OCI-LY7 (cell line): ENCODE measurements at regions of chr20 and their contacts with region 1.

Region 1: DNA sequence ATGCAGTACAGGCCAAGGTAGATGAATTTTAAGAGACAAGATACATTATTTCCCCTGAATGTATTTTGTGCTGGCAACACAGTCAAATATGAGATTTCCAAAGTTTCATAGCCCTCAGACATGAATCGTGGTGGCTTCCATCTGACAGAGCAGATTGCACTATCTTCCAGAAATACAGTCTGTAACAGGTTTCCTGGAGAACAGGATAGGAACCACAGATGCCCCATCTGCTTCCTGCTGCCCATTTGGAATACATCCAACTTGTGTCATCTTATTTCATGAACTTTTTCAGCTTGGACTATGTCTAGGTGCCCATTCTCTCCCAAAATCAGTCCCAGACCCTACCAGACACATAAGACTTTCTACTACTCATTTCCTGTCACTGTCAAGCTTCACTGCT is 426.0 kb downstream of the KIF16B start:
- DNase-seq: no peak
- H3K4me3 ChIP-seq: no peak overlapping the region
- H3K27ac ChIP-seq: no peak overlapping the region
- H3K4me1 ChIP-seq: no peaks in the 10 kb centered on the region
- CTCF ChIP-seq: no peak

Region 2: DNA sequence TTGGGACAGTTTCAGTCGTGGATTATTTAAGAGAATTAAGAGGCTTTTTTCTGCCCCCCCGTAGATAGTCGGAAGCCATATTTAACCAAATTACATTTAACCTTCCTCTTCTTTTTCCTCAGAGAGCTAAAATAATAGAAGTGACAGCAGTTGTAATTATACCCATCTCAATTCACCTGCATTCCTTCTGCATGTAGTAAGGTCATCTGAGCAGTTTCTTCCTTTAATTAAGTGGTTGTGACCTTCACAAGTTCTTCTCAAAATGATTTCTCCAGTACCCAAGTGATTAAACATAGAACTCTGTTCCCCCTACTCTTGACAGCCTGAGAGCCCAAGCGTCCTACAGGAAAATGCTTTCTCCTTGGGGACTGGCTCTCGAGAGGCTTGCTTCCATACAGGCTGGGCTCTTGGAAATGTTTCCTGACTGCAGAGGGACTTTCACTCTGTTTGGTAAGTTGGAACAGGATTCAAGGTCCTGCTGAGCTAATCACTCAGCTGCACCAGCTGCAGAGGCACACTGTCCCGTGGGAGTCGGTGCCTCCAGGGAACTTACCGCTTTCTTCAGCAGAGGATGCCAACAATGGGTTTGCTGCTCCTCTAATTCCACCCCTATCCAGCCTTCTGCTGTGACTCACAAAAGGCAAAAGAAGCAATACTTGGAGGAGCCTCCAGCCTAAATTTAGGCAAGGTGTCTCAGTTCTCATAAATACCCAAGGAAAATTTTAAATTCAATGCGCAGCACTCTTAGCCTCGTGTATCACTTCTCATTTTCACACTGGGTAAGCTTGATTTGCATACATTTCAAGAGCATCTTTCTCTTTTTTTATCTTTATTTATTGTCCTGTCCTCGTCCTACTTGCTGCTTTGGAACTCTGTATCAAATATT is 11.1 kb after region 1 on chr20:
- CTCF ChIA-PET with region 1: interaction called, 3 read pairs
- POLR2A ChIA-PET with region 1: interaction called, 10 read pairs
- intact Hi-C with region 1: no loop called
- DNase-seq: peak; percentile 60
- H3K4me3 ChIP-seq: peak overlapping the region; percentile 39
- H3K27ac ChIP-seq: peak overlapping the region; percentile 74
- H3K4me1 ChIP-seq: peaks cover 22% of the 10 kb centered on the region
- CTCF ChIP-seq: no peak

Region 3: GRCh38 chr20:16209951-16210361 is 62.7 kb after region 1 on chr20:
- CTCF ChIA-PET with region 1: no interaction called
- POLR2A ChIA-PET with region 1: no interaction called
- intact Hi-C with region 1: no loop called
- DNase-seq: no peak
- H3K4me3 ChIP-seq: no peak overlapping the region
- H3K27ac ChIP-seq: no peak overlapping the region
- H3K4me1 ChIP-seq: no peaks in the 10 kb centered on the region
- CTCF ChIP-seq: no peak